ENCODE measurements at regions of chr2 and their contacts with region 1.

Region 1: GRCh38 chr2:28437151-28437811 is 44.6 kb downstream of the FOSL2 start:
- DNase-seq: peak; percentile 82 to 90
- H3K4me3 ChIP-seq: peak overlapping the region; percentile 27; the same call in 1 of the 2 replicates
- H3K27ac ChIP-seq: peak overlapping the region; percentile 93
- H3K4me1 ChIP-seq: peaks cover 39% of the 10 kb centered on the region
- H3K27me3 ChIP-seq: no peaks in the 10 kb centered on the region
- CTCF ChIP-seq: no peak

Region 2: DNA sequence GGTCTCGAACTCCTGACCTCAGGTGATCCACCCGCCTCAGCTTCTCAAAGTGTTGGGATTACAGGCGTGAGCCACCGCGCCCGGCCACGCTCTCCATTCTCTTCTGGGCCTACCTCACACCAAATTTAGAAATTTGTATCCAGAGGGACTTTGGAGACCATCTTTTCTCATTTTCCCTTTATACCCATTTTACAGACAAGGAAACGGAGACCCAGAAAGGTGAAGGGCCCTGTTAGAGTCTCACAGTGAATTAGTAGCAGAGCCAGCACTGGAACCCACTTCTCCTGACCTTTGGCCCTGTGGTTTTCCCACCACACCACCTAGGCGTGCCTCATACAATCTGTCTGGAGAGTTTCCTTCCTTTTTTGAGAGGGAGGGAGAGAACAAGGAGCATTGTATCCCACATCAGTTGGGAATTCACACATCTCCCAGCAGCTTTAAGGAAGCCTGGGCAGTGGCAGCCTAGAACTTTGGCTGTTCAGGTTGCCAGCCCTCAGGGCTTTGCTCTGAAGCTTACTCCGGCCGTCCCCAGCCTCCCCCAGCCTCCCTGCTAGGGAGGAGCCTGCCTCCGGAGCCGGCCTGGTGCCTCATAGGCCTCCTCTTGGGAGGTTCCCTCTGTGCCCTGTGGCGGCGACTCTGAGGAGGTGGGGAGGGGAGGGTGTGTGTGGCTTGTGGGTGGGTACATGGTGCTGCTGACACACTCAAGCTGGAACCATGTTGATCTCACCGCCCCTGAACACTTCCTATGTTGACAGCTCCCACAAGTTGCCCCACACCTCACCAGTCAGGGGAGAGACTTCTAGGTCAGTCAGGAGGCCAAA is 30.8 kb before region 1 on chr2:
- CTCF ChIA-PET with region 1: interaction called, 12 read pairs
- POLR2A ChIA-PET with region 1: interaction called, 13 read pairs
- intact Hi-C with region 1: loop called (anchors 1 kb)
- DNase-seq: peak in 1 of 2 experiments; percentile 84
- H3K4me3 ChIP-seq: no peak overlapping the region
- H3K27ac ChIP-seq: peak overlapping the region; percentile 23; the same call in 1 of the 2 replicates
- H3K4me1 ChIP-seq: no peaks in the 10 kb centered on the region
- H3K27me3 ChIP-seq: no peaks in the 10 kb centered on the region
- CTCF ChIP-seq: no peak